Activated naive CD4-positive, alpha-beta T cell treated with anti-CD3 and anti-CD28 coated beads for 36 hours (primary cell): ENCODE measurements at regions of chr9 and their contacts with region 1.

Region 1: GRCh38 chr9:93003552-93004407 is 54.7 kb upstream of the SUSD3 start:
- DNase-seq: peak; percentile 82
- H3K4me3 Mint-ChIP-seq: no peak overlapping the region
- H3K27ac Mint-ChIP-seq: peak overlapping the region; percentile 90
- H3K4me1 Mint-ChIP-seq: peaks cover 54% of the 10 kb centered on the region
- H3K27me3 Mint-ChIP-seq: no peaks in the 10 kb centered on the region

Region 2: DNA sequence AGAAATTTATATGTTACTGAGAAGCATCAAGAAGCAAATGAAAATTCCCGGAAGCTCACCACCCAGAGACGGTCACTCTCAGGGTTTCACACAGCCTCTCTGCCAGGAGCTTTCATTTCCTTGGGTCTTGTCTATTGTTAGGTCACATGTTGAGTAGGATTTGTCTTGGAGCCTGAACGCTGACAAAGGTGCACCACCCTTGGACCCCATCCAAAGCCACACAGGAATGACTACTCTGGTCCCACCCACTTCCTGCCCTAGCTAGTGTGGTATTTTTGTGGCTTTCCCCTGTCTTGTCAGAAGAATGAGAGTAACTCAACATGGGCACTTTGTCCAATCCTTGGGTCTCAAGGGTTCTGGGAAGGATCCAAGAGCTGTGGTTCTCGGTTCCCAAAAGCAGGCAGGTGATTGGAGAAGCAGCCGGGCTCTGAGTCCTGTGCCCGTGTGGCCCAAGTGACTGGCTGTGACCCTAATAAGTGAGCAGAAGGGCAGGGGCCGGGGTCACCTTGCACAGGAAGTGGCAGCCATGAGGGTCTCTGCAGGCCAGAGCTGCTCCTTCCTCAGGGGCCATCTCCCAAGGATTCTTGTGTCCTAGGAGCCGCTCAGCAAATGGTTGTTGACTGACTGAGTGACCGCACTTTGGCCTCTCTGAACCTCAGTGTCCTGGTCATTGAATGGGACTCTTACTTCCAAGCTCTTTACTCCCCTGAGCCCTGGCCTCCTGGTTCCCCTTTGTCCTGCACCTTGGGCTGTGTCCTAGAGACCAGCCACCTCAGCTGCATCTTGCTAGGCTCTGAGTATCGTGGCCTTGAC is 49.5 kb before region 1 on chr9:
- CTCF ChIA-PET with region 1: interaction called, 65 read pairs
- intact Hi-C with region 1: loop called (anchors 1 kb)
- DNase-seq: peak; percentile 95
- H3K4me3 Mint-ChIP-seq: peak overlapping the region; percentile 60
- H3K27ac Mint-ChIP-seq: peak overlapping the region; percentile 91
- H3K4me1 Mint-ChIP-seq: peaks cover 75% of the 10 kb centered on the region
- H3K27me3 Mint-ChIP-seq: no peaks in the 10 kb centered on the region

Region 3: GRCh38 chr9:92986176-92987085 is 17.3 kb before region 1 on chr9:
- CTCF ChIA-PET with region 1: interaction called, 42 read pairs
- intact Hi-C with region 1: no loop called
- DNase-seq: peak; percentile 84
- H3K4me3 Mint-ChIP-seq: no peak overlapping the region
- H3K27ac Mint-ChIP-seq: peak overlapping the region; percentile 92
- H3K4me1 Mint-ChIP-seq: peaks cover 73% of the 10 kb centered on the region
- H3K27me3 Mint-ChIP-seq: no peaks in the 10 kb centered on the region

Region 4: GRCh38 chr9:93013856-93014582 is 10.2 kb after region 1 on chr9:
- CTCF ChIA-PET with region 1: interaction called, 34 read pairs
- intact Hi-C with region 1: no loop called
- DNase-seq: no peak
- H3K4me3 Mint-ChIP-seq: no peak overlapping the region
- H3K27ac Mint-ChIP-seq: no peak overlapping the region
- H3K4me1 Mint-ChIP-seq: peaks cover 13% of the 10 kb centered on the region
- H3K27me3 Mint-ChIP-seq: no peaks in the 10 kb centered on the region

Region 5: GRCh38 chr9:93058355-93059096 is 54.7 kb after region 1 on chr9 and contains the start of gene SUSD3:
- CTCF ChIA-PET with region 1: interaction called, 12 read pairs
- intact Hi-C with region 1: no loop called
- DNase-seq: peak; percentile 66
- H3K4me3 Mint-ChIP-seq: peak within 1 kb of the TSS; percentile 93
- H3K27ac Mint-ChIP-seq: peak within 1 kb of the TSS; percentile 99
- H3K4me1 Mint-ChIP-seq: peaks cover 55% of the 10 kb centered on the region
- H3K27me3 Mint-ChIP-seq: no peaks in the 10 kb centered on the region
- total RNA-seq, gene SUSD3: 62.7 to 68.3 TPM

Region 6: GRCh38 chr9:93143830-93144530 is 140.2 kb after region 1 on chr9:
- CTCF ChIA-PET with region 1: interaction called, 3 read pairs
- intact Hi-C with region 1: loop called (anchors 5 kb)
- DNase-seq: peak; percentile 67
- H3K4me3 Mint-ChIP-seq: no peak overlapping the region
- H3K27ac Mint-ChIP-seq: peak overlapping the region; percentile 79
- H3K4me1 Mint-ChIP-seq: peaks cover 68% of the 10 kb centered on the region
- H3K27me3 Mint-ChIP-seq: no peaks in the 10 kb centered on the region